ENCODE measurements at regions of chr7 and their contacts with region 1.

Region 1: DNA sequence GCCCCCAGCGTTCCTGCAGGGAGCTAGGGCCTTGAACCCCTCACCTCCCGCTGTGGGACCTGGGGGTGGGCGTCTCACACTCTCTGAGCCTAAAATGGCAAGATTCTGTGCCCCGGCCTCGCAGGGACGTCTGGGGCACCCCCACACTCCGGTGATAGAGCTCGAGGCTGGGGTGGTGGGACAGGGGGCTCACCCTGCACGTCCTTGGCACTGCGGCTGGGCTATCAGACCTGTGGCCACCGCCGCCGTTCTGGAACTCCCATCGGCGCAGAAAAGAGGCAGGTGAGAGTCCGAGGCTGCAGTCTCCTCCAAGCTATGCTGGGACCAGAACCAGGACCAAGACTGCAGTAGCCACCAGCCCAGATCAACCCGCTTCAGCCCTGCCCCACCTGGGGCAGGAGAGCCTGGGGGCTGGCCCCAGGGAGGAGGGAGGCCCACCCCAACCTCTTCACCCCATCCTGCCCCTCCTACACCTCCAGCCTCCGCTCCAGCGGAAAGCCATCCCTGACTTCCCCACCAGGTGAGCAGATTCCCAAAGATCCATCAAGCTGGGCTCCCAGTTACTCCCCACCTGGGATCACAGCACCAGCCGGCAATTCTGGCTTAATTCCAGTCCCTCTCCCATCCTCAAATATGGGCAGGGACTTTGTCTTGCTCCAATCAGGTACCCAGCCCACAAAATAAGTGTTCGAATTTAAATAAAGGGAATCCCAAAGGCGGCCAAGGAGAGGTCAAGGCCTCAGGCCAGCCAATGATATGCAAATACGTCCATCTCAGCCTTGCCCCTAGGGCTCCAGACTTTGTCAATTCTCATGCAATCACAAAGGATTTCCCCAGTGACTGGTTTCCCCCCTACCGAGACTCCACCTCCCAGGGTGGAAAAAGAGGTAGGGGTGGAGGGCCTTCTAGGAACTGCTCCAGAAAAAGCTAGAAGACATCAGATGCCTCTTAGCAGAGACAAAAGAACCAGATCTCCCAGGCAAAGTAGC is 16.4 kb downstream of the TNRC18 start:
- DNase-seq: peak; percentile 83
- ATAC-seq: peak; percentile 93
- H3K4me3 Mint-ChIP-seq: peak overlapping the region; percentile 49
- H3K27ac Mint-ChIP-seq: peak overlapping the region; percentile 96
- H3K4me1 Mint-ChIP-seq: peaks cover 34% of the 10 kb centered on the region
- H3K27me3 Mint-ChIP-seq: peaks cover 59% of the 10 kb centered on the region
- CTCF ChIP-seq: no peak

Region 2: GRCh38 chr7:5373300-5373699 is 34.0 kb before region 1 on chr7:
- CTCF ChIA-PET with region 1: no interaction called
- POLR2A ChIA-PET with region 1: no interaction called
- DNase-seq: no peak
- ATAC-seq: no peak
- H3K4me3 Mint-ChIP-seq: no peak overlapping the region
- H3K27ac Mint-ChIP-seq: 0 out of 2 replicates have a peak overlapping the region, but pooled peaks have one; percentile 53
- H3K4me1 Mint-ChIP-seq: no peaks in the 10 kb centered on the region
- H3K27me3 Mint-ChIP-seq: no peaks in the 10 kb centered on the region
- CTCF ChIP-seq: no peak

Region 3: DNA sequence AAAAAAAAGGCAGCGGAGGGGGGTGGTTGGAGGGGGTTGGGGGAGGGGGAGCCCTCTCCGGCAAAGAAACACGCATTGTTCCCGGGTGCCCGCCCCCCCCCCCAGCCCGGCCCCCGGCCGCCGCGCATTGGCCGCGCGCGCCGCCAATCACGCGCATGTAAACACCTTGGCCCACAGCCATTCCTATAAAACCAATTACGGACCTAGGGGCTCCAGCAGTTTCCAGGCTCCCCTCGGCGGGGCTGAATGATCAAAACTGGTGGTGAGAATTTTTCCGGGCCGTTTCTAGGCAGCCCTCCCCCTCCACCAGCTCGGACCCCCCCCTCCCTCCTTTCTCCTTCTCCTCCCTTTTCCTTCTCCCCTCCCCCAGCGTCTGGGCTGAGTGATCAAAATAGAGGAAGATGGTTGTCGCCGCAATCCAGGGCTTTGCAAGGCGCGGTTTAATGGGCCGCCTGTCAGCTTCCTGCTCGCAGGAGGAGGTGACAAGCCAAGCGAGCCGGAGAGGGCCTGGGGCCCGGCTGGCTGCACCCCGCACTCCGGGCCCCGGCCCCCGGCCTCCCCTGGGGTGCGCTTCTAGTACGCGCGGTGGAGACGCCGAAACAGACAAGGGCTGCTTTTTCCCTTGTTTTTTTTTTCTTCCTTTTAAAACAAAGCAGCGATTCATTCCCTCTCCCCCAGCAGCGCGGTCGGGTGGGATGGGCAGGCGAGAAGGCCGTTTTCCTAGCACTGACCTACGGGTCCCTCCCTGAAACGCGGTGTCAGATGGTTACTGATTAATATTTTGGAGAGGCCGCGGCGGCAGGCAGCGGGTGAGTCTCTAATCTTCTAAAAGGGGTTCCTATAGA is 16.8 kb after region 1 on chr7:
- CTCF ChIA-PET with region 1: interaction called, 6 read pairs
- POLR2A ChIA-PET with region 1: interaction called, 20 read pairs
- DNase-seq: peak; percentile 94
- ATAC-seq: peak; percentile 22
- H3K4me3 Mint-ChIP-seq: peak overlapping the region; percentile 88
- H3K27ac Mint-ChIP-seq: peak overlapping the region; percentile 97
- H3K4me1 Mint-ChIP-seq: peaks cover 11% of the 10 kb centered on the region
- H3K27me3 Mint-ChIP-seq: peaks cover 67% of the 10 kb centered on the region
- CTCF ChIP-seq: no peak

Region 4: DNA sequence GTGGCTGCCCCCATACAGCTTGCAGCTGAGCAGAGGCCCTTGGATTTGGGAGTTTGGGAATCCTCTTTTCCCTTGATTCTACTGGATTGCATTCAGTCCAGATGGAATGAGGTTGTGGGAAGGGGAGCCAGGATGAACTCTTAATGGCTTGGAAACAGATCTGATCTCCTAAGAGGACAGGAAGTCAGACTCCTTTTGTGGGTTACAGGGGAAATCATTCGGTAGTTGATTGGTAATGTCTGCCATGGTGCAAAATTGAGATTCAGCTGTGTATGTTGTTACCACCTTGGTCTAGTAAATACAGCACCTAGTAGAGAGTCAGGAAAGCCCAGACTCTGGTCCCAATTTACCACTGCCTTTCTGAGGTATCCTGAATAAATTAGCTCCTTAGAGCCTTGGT is 160.5 kb after region 1 on chr7:
- CTCF ChIA-PET with region 1: no interaction called
- POLR2A ChIA-PET with region 1: no interaction called
- DNase-seq: no peak
- ATAC-seq: no peak
- H3K4me3 Mint-ChIP-seq: no peak overlapping the region
- H3K27ac Mint-ChIP-seq: no peak overlapping the region
- H3K4me1 Mint-ChIP-seq: peaks cover 19% of the 10 kb centered on the region
- H3K27me3 Mint-ChIP-seq: peaks cover 4% of the 10 kb centered on the region; the same call in 1 of the 2 replicates
- CTCF ChIP-seq: no peak

Measured in WTC11 (cell line).